H1 (cell line): ENCODE measurements at regions of chr17 and their contacts with region 1.

Region 1: GRCh38 chr17:35808962-35809854 is at the start of gene TAF15:
- DNase-seq: peak; percentile 89 to 94
- H3K4me3 ChIP-seq: peak within 1 kb of the TSS; percentile 91 to 98 (median 94)
- H3K27ac ChIP-seq: peak within 1 kb of the TSS; percentile 99
- H3K4me1 ChIP-seq: peaks cover 0 to 10% (median 0%) of the 10 kb centered on the region in 4 experiments; a peak in 3 of 7 replicates
- H3K27me3 ChIP-seq: no peaks in the 10 kb centered on the region
- CTCF ChIP-seq: peak; percentile 67 to 76 (median 72)
- EP300 ChIP-seq: peak in 1 of 2 experiments; percentile 100; a peak in 2 of 3 replicates
- POLR2A ChIP-seq: peak; percentile 97 to 99
- RAD21 ChIP-seq: peak; percentile 50 to 52; a peak in 3 of 4 replicates
- total RNA-seq, gene TAF15: 323 and 338 TPM in 2 replicates

Region 2: DNA sequence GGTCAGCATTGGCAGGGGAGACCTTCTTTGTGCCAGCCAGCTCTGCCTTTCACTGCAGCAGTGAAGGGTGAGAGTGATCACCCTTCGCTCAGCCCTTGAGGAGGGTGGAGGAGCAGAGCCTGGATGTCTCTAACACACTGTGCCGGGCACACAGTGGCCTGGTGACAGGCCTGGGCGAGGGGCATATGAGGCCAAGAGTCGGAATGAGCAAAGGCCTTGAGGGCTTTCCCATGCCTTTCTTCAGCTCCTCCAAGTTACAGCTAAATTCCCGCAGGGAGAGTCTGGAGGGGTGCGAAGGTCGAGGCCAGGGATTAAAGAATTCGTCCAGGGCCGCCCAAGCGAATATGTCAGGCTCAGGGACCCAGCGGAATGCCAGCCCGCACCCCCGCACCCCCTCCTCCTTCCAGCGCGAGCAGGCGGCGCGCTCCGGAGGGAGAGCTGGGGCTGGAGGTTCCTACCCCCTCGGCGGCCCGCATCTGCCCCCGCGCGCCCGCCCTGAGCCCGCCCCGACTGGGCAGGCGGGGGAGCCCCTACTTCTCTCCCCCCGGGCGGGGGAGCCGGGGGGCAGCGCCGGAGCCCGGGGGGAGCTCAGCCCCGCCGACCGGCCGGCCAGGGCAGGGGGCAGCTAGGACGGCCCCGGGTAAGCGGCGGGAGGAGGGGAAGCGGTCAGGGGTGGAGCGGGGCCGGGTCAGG is 77.8 kb before region 1 on chr17 and contains the start of gene RASL10B:
- CTCF ChIA-PET with region 1: interaction called, 4 read pairs
- POLR2A ChIA-PET with region 1: interaction called, 16 read pairs
- DNase-seq: peak in 1 of 2 experiments; percentile 85
- H3K4me3 ChIP-seq: peak within 1 kb of the TSS; percentile 67 to 85 (median 78)
- H3K27ac ChIP-seq: no peak within 1 kb of the TSS
- H3K4me1 ChIP-seq: peaks cover 7 to 26% (median 8%) of the 10 kb centered on the region in 4 experiments; a peak in 6 of 7 replicates
- H3K27me3 ChIP-seq: peaks cover 0 to 8% (median 5%) of the 10 kb centered on the region in 4 experiments; a peak in 4 of 7 replicates
- CTCF ChIP-seq: no peak
- EP300 ChIP-seq: no peak
- POLR2A ChIP-seq: no peak
- RAD21 ChIP-seq: no peak; a peak in 1 of 4 replicates
- total RNA-seq, gene RASL10B: 21.6 and 22.8 TPM in 2 replicates

Region 3: GRCh38 chr17:35774499-35774898 is 34.7 kb before region 1 on chr17:
- CTCF ChIA-PET with region 1: interaction called, 107 read pairs
- POLR2A ChIA-PET with region 1: interaction called, 13 read pairs
- DNase-seq: no peak
- H3K4me3 ChIP-seq: no peak overlapping the region
- H3K27ac ChIP-seq: no peak overlapping the region
- H3K4me1 ChIP-seq: peaks cover 5 to 21% (median 6%) of the 10 kb centered on the region in 4 experiments
- H3K27me3 ChIP-seq: no peaks in the 10 kb centered on the region
- CTCF ChIP-seq: no peak
- EP300 ChIP-seq: no peak
- POLR2A ChIP-seq: no peak
- RAD21 ChIP-seq: no peak

Region 4: GRCh38 chr17:35788504-35789368 is 20.5 kb before region 1 on chr17:
- CTCF ChIA-PET with region 1: interaction called, 37 read pairs
- POLR2A ChIA-PET with region 1: interaction called, 50 read pairs
- DNase-seq: no peak
- H3K4me3 ChIP-seq: no peak overlapping the region
- H3K27ac ChIP-seq: no peak overlapping the region
- H3K4me1 ChIP-seq: 0 out of 7 replicates have a peak, but pooled peaks cover 0 to 2% (median 0%) of the 10 kb centered on the region in 4 experiments
- H3K27me3 ChIP-seq: peaks cover 6 to 12% (median 10%) of the 10 kb centered on the region in 4 experiments
- CTCF ChIP-seq: no peak
- EP300 ChIP-seq: no peak
- POLR2A ChIP-seq: no peak
- RAD21 ChIP-seq: no peak

Region 5: GRCh38 chr17:35825206-35825605 is 16.0 kb after region 1 on chr17:
- CTCF ChIA-PET with region 1: interaction called, 4 read pairs
- POLR2A ChIA-PET with region 1: interaction called, 18 read pairs
- DNase-seq: no peak
- H3K4me3 ChIP-seq: no peak overlapping the region
- H3K27ac ChIP-seq: no peak overlapping the region
- H3K4me1 ChIP-seq: no peaks in the 10 kb centered on the region
- H3K27me3 ChIP-seq: no peaks in the 10 kb centered on the region
- CTCF ChIP-seq: no peak
- EP300 ChIP-seq: no peak
- POLR2A ChIP-seq: no peak
- RAD21 ChIP-seq: no peak

Region 6: GRCh38 chr17:35942588-35943186 is 133.5 kb after region 1 on chr17:
- CTCF ChIA-PET with region 1: no interaction called
- POLR2A ChIA-PET with region 1: no interaction called
- DNase-seq: no peak
- H3K4me3 ChIP-seq: no peak overlapping the region
- H3K27ac ChIP-seq: no peak overlapping the region
- H3K4me1 ChIP-seq: no peaks in the 10 kb centered on the region
- H3K27me3 ChIP-seq: no peaks in the 10 kb centered on the region
- CTCF ChIP-seq: no peak
- EP300 ChIP-seq: no peak
- POLR2A ChIP-seq: no peak
- RAD21 ChIP-seq: no peak

Region 7: DNA sequence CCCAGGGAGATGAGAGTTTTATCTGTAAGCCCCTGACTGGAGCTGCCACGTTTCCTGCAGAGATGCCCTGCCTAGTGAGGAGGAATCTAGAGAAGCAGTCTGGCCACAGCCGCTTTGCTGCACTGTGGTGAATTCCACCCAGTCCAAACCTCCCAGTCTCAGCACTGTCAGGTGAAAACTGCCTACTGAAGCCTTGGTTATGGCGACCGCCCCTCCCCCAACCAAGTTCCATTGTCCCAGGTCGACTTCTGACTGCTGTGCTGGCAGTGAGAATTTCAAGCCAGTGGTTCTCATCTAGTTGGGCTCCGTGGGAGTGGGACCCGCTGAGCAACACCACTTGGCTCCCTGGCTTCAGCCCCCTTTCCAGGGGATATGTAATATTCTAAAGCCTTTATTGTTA is 144.5 kb after region 1 on chr17:
- CTCF ChIA-PET with region 1: no interaction called
- POLR2A ChIA-PET with region 1: no interaction called
- DNase-seq: peak in 1 of 2 experiments; percentile 58
- H3K4me3 ChIP-seq: no peak overlapping the region
- H3K27ac ChIP-seq: no peak overlapping the region
- H3K4me1 ChIP-seq: peaks cover 0 to 7% (median 2%) of the 10 kb centered on the region in 4 experiments; a peak in 4 of 7 replicates
- H3K27me3 ChIP-seq: no peaks in the 10 kb centered on the region
- CTCF ChIP-seq: no peak
- EP300 ChIP-seq: no peak
- POLR2A ChIP-seq: no peak
- RAD21 ChIP-seq: no peak